Posterior vena cava (tissue), 2 donors: ENCODE measurements at regions of chr3 and their contacts with region 1.

Region 1: GRCh38 chr3:195271116-195271858 is at the start of gene XXYLT1:
- DNase-seq: peak; percentile 97
- total RNA-seq, gene XXYLT1: 11.3 to 15.7 TPM

Region 2: DNA sequence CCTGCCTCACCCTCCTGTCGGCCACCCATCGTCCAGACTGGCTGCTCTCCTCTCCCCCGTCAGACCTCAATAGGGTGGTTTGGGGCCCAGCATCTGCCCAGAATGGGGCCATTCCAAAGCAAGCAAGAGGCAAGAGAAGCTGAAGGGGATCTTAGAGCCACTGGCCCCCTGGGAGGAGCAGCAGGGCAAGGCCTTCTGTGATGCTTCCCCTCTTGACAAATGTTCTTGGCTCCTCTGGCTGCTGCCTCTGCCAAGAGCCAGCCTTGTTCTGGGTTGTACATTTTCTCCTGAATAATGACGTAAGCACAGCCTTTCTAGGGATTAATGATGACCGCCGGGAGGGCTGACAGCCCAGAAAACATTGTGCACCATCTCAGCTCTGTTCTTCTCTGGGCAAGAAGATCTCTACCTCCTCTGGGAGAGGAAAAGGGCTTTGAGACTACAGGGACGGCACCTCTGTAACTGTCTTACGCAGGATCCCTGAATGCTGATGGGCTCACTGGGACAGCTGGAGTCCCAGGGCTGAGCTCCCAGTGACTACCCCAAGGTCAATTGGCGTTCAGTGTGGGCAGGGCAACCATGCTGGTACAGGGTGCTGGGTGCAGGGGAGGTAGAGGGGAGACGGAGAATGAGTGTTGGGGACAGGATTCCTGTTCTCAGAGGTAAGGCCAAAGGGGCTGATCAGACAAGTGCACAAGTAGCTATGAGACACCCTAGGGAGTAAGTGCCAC is 332.3 kb before region 1 on chr3:
- intact Hi-C with region 1: loop called in 1 of 2 experiments (anchors 5 kb)
- DNase-seq: no peak

Region 3: GRCh38 chr3:195286115-195286872 is 15.0 kb after region 1 on chr3:
- intact Hi-C with region 1: no loop called
- DNase-seq: no peak

Region 4: GRCh38 chr3:195512798-195513345 is 241.6 kb after region 1 on chr3:
- intact Hi-C with region 1: loop called in 1 of 2 experiments (anchors 10 kb)
- DNase-seq: no peak

Region 5: DNA sequence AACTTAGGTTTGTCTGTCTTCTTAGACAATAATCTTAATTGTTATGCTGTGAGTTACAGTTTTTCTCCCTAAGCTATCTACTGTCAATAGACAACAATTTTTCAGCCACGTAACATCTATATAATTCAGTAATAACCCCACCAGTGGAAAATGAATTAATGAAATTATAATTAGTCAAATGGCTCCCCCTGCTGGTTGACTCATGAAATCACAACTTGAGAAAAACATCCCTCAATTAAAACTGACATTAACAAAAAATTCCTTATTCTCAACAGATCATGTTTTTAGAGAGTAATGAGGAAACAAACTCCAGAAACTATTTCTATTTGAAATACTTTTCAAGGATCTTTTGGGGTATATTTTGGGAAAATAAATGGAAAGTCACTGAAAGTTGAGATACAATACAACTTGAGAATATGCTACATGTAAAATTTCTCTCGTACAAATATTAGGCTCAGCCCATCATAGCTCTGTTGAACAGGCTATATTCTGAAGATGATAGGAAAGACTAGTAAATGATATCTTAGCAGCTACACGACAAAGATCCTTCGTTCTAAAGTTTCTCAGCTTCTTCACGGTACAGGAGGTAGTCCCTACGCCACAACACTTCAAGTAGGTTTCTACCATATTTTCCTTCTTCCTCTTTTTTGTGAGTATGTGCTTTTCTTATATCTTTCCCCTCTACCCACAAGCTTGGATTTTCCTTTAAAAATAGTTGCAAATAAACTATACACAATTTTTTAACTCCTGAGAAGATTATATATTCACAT is 251.2 kb after region 1 on chr3:
- intact Hi-C with region 1: loop called (anchors 2 to 10 kb)
- DNase-seq: no peak